ENCODE measurements at regions of chr5 and their contacts with region 1.

Region 1: DNA sequence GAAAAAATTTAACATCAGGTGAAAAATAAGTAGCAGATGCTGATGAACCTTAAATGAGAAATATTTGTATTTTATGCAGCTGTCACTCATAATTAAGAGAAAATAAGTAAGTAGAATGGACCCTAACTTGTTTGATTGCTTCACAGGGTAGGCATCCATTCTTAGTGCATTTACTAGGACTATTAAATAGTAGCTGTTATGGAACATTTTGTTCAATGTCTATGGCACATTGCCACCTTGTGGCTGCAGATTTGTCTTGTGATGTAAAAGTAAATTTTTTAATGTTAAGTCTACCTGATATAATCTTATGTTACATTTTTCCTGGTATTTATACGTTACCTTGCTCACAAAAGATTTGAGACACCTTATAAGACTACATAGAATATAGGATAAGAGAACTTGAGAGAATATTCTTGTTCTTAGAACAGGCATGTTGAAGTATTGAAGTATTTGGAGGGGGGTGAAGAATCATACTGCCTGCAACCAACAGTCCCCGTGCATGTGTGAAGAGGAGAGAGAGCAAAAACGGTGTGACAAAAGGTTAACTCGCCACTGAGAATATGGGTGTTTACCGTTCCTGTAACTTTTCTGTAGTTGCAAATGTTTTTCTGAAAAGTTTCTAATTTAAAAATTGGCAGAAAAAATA is 161.1 kb downstream of the MAST4 start:
- DNase-seq: no peak
- H3K4me3 ChIP-seq: no peak overlapping the region
- H3K27ac ChIP-seq: no peak overlapping the region
- H3K4me1 ChIP-seq: no peaks in the 10 kb centered on the region
- H3K27me3 ChIP-seq: no peaks in the 10 kb centered on the region
- CTCF ChIP-seq: peak in 1 of 3 experiments; percentile 35; a peak in 2 of 4 replicates
- EP300 ChIP-seq: no peak
- POLR2A ChIP-seq: no peak
- RAD21 ChIP-seq: peak; percentile 59 to 71

Region 2: GRCh38 chr5:66529182-66529581 is 228.1 kb before region 1 on chr5:
- CTCF ChIA-PET with region 1: no interaction called
- POLR2A ChIA-PET with region 1: no interaction called
- DNase-seq: no peak
- H3K4me3 ChIP-seq: no peak overlapping the region
- H3K27ac ChIP-seq: no peak overlapping the region
- H3K4me1 ChIP-seq: no peaks in the 10 kb centered on the region
- H3K27me3 ChIP-seq: no peaks in the 10 kb centered on the region
- CTCF ChIP-seq: no peak
- EP300 ChIP-seq: no peak
- POLR2A ChIP-seq: no peak
- RAD21 ChIP-seq: no peak

Region 3: GRCh38 chr5:66724349-66725139 is 32.8 kb before region 1 on chr5:
- CTCF ChIA-PET with region 1: interaction called, 11 read pairs
- POLR2A ChIA-PET with region 1: no interaction called
- DNase-seq: no peak
- H3K4me3 ChIP-seq: no peak overlapping the region
- H3K27ac ChIP-seq: no peak overlapping the region
- H3K4me1 ChIP-seq: peaks cover 0 to 2% (median 0%) of the 10 kb centered on the region in 4 experiments; a peak in 3 of 7 replicates
- H3K27me3 ChIP-seq: no peaks in the 10 kb centered on the region
- CTCF ChIP-seq: no peak
- EP300 ChIP-seq: no peak
- POLR2A ChIP-seq: no peak
- RAD21 ChIP-seq: no peak

Measured in H1 (cell line).